Activated B cell treated with CpG ODN at 0.5 μM for 24 hours (primary cell): ENCODE measurements at regions of chr13 and their contacts with region 1.

Region 1: GRCh38 chr13:99281811-99282263 is 23.7 kb upstream of the GPR18 start:
- DNase-seq: peak; percentile 46
- ATAC-seq: peak; percentile 81
- H3K4me3 Mint-ChIP-seq: peak overlapping the region; percentile 75
- H3K27ac Mint-ChIP-seq: peak overlapping the region; percentile 95
- H3K4me1 Mint-ChIP-seq: peaks cover 95% of the 10 kb centered on the region
- H3K27me3 Mint-ChIP-seq: no peaks in the 10 kb centered on the region
- CTCF ChIP-seq: no peak

Region 2: DNA sequence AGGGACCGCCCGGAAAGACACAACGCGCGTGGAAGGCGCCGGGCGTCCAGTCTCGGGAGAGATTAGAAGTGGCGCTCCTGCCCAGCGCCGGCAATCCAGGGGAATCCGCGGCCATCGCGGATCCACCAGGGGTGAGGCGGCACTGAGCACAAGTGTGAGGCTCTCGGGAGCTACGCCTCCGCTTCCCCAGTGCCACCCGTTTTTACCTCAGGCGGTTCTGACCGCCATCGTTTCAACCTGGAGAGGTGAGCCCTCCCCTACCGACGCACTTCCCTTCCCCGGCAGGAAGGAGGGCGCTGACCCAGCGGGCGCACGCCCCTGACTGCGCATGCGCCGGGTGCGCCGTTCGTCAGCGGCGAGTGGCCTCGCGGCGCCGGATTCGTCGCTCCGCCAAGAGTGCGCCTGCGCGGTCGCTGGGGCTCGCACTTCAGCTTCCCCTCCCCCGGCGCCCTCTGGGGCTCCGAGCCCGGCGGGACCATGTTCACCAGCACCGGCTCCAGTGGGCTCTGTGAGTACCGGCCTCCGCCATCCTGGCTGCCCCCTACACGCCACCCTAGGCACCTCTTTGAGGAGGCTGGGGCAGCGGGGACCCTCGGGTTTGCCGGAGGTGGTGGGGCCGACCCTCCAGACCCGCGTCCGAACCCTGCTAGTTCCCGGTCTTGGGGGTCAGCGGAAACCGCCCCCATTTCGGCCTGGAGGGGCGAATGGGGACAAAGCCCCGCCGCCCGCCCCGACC is 81.2 kb before region 1 on chr13 and contains the start of gene UBAC2:
- CTCF ChIA-PET with region 1: interaction called, 3 read pairs
- POLR2A ChIA-PET with region 1: interaction called, 15 read pairs
- intact Hi-C with region 1: loop called (anchors 1 kb)
- DNase-seq: peak; percentile 98
- ATAC-seq: peak; percentile 74
- H3K4me3 Mint-ChIP-seq: peak within 1 kb of the TSS; percentile 95
- H3K27ac Mint-ChIP-seq: peak within 1 kb of the TSS; percentile 94
- H3K4me1 Mint-ChIP-seq: peaks cover 59% of the 10 kb centered on the region
- H3K27me3 Mint-ChIP-seq: no peaks in the 10 kb centered on the region
- CTCF ChIP-seq: no peak
- total RNA-seq, gene UBAC2: 40.6 and 51.0 TPM in 2 replicates

Region 3: GRCh38 chr13:99296398-99296797 is 14.6 kb after region 1 on chr13:
- CTCF ChIA-PET with region 1: interaction called, 6 read pairs
- POLR2A ChIA-PET with region 1: interaction called, 21 read pairs
- intact Hi-C with region 1: loop called (anchors 2 kb)
- DNase-seq: no peak
- ATAC-seq: peak; percentile 45
- H3K4me3 Mint-ChIP-seq: peak overlapping the region; percentile 74
- H3K27ac Mint-ChIP-seq: peak overlapping the region; percentile 92
- H3K4me1 Mint-ChIP-seq: peaks cover 87% of the 10 kb centered on the region
- H3K27me3 Mint-ChIP-seq: no peaks in the 10 kb centered on the region
- CTCF ChIP-seq: no peak

Region 4: DNA sequence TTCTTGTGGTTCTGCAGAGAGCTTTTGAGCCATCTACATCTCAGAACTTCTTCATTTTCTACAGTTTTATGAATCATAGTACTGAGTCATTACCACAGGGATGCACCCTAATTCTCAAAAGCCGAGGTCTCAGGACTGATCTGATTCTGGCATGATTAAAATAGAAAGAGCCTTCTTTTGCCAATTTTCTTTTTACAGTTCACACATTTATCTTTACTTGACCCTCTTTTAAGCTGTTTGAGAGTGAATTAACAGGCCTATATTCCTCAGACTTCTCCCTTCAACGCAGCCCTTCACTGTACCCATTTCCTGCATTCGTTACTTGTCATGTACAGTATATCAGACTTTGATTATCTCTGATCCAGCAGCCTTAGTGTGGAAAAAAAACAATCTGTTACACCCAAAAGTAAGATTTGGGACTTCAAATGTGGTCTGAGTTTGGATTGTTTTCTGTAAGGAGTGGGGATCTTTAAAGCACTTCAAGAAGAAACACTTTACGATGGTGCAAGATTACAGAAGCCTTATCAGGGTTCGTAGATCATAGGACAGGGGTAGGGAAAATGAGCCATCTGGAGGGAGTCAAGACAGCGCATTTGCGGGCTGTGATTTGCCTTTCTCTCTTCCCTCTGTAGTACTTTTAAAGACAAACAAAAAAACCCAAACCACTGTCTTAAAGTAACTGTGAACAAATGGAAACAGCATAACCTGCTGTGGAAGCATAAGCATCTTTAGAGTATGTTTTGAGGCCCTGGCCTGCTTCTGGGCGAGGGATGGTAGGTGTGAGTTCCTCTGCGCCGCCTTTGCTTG is 40.7 kb after region 1 on chr13:
- CTCF ChIA-PET with region 1: interaction called, 3 read pairs
- POLR2A ChIA-PET with region 1: interaction called, 11 read pairs
- intact Hi-C with region 1: loop called (anchors 1 kb)
- DNase-seq: no peak
- ATAC-seq: peak; percentile 87
- H3K4me3 Mint-ChIP-seq: peak overlapping the region; percentile 56
- H3K27ac Mint-ChIP-seq: peak overlapping the region; percentile 91
- H3K4me1 Mint-ChIP-seq: peaks cover 66% of the 10 kb centered on the region
- H3K27me3 Mint-ChIP-seq: no peaks in the 10 kb centered on the region
- CTCF ChIP-seq: no peak

Region 5: GRCh38 chr13:99380921-99381645 is 99.2 kb after region 1 on chr13:
- CTCF ChIA-PET with region 1: interaction called, 9 read pairs
- POLR2A ChIA-PET with region 1: interaction called, 45 read pairs
- intact Hi-C with region 1: no loop called
- DNase-seq: no peak
- ATAC-seq: peak; percentile 25
- H3K4me3 Mint-ChIP-seq: peak overlapping the region; percentile 25
- H3K27ac Mint-ChIP-seq: peak overlapping the region; percentile 63
- H3K4me1 Mint-ChIP-seq: peaks cover 81% of the 10 kb centered on the region
- H3K27me3 Mint-ChIP-seq: no peaks in the 10 kb centered on the region
- CTCF ChIP-seq: no peak

Region 6: GRCh38 chr13:99501184-99501847 is 219.5 kb after region 1 on chr13 and contains the start of gene TM9SF2:
- CTCF ChIA-PET with region 1: no interaction called
- POLR2A ChIA-PET with region 1: no interaction called
- intact Hi-C with region 1: loop called (anchors 5 kb)
- DNase-seq: peak; percentile 98
- ATAC-seq: peak; percentile 61
- H3K4me3 Mint-ChIP-seq: peak within 1 kb of the TSS; percentile 97
- H3K27ac Mint-ChIP-seq: peak within 1 kb of the TSS; percentile 97
- H3K4me1 Mint-ChIP-seq: peaks cover 84% of the 10 kb centered on the region
- H3K27me3 Mint-ChIP-seq: no peaks in the 10 kb centered on the region
- CTCF ChIP-seq: no peak
- total RNA-seq, gene TM9SF2: 68.1 and 76.0 TPM in 2 replicates